CD8-positive, alpha-beta T cell (primary cell): ENCODE measurements at regions of chr4 and their contacts with region 1.

Region 1: DNA sequence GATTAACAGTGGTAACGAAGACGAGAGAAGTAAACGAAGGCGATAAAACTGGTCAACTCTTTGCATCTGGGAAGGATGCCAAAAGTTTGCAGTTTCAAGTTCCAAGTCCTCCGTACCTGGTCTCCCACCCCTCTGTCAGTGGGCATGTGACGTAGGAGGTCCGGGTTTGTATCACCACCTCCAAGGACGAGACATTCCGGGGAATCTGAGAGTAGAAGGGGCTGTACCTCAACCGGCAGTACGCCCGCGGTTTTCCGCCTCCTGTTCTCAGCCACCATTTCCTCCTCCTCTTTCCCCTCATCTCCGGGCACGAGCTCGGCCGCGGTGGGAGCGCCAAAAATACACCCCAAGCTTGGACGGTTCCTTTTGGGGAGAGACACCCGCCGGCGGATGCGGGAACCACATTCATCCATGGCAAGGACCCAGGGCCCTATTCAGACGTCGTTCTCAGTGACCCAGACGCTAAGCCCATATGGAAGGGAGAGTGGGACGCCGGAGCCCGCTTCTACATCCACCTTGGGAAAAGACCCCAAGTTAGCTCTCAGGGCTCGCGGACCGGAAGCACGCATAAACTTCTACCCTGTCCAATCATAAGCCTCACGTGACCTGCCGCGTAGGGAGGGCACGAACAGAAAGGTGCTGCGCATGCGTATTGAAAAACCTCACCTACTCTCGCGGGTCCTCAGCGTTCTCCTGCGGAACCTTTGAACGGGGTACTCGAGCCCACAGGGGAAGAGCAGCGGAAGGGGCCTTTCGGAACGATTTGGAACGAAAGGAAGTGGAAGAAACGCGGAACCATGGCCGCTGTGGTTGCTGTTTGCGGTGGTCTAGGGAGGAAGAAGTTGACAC is at the starts of genes HELQ and MRPS18C:
- DNase-seq: peak; percentile 89 to 100 (median 92)
- ATAC-seq: peak; percentile 86
- H3K4me3 ChIP-seq: peak within 1 kb of the TSS; percentile 62 to 91
- H3K4me3 Mint-ChIP-seq: peak within 1 kb of the TSS; percentile 100
- H3K27ac ChIP-seq: peak within 1 kb of the TSS; percentile 99
- H3K27ac Mint-ChIP-seq: peak within 1 kb of the TSS; percentile 100
- H3K4me1 ChIP-seq: peaks cover 27% of the 10 kb centered on the region
- H3K4me1 Mint-ChIP-seq: peaks cover 65% of the 10 kb centered on the region
- H3K27me3 ChIP-seq: no peaks in the 10 kb centered on the region
- H3K27me3 Mint-ChIP-seq: no peaks in the 10 kb centered on the region
- CTCF ChIP-seq: no peak
- total RNA-seq, gene HELQ: 25.6 to 28.0 TPM
- total RNA-seq, gene MRPS18C: 17.7 to 24.1 TPM

Region 2: GRCh38 chr4:82373816-82374625 is 1081.5 kb before region 1 on chr4 and contains the start of gene HNRNPD:
- CTCF ChIA-PET with region 1: no interaction called
- POLR2A ChIA-PET with region 1: no interaction called
- intact Hi-C with region 1: loop called in 1 of 2 experiments (anchors 2 kb)
- DNase-seq: peak; percentile 76 to 99 (median 91)
- ATAC-seq: peak; percentile 83
- H3K4me3 ChIP-seq: peak within 1 kb of the TSS; percentile 94 to 98
- H3K4me3 Mint-ChIP-seq: peak within 1 kb of the TSS; percentile 100
- H3K27ac ChIP-seq: peak within 1 kb of the TSS; percentile 87 to 99
- H3K27ac Mint-ChIP-seq: peak within 1 kb of the TSS; percentile 100
- H3K4me1 ChIP-seq: peaks cover 34% of the 10 kb centered on the region
- H3K4me1 Mint-ChIP-seq: peaks cover 51% of the 10 kb centered on the region
- H3K27me3 ChIP-seq: no peaks in the 10 kb centered on the region
- H3K27me3 Mint-ChIP-seq: no peaks in the 10 kb centered on the region
- CTCF ChIP-seq: no peak
- total RNA-seq, gene HNRNPD: 245 to 248 TPM

Region 3: GRCh38 chr4:82890901-82891706 is 564.4 kb before region 1 on chr4 and contains the start of gene SEC31A:
- CTCF ChIA-PET with region 1: no interaction called
- POLR2A ChIA-PET with region 1: no interaction called
- intact Hi-C with region 1: loop called in 1 of 2 experiments (anchors 2 kb)
- DNase-seq: peak; percentile 93 to 99 (median 97)
- ATAC-seq: peak; percentile 93
- H3K4me3 ChIP-seq: peak within 1 kb of the TSS; percentile 87 to 88
- H3K4me3 Mint-ChIP-seq: peak within 1 kb of the TSS; percentile 89
- H3K27ac ChIP-seq: peak within 1 kb of the TSS; percentile 96
- H3K27ac Mint-ChIP-seq: peak within 1 kb of the TSS; percentile 98
- H3K4me1 ChIP-seq: peaks cover 22% of the 10 kb centered on the region
- H3K4me1 Mint-ChIP-seq: peaks cover 45% of the 10 kb centered on the region
- H3K27me3 ChIP-seq: no peaks in the 10 kb centered on the region
- H3K27me3 Mint-ChIP-seq: no peaks in the 10 kb centered on the region
- CTCF ChIP-seq: no peak
- total RNA-seq, gene SEC31A: 115 to 117 TPM

Region 4: GRCh38 chr4:83034630-83035494 is 420.6 kb before region 1 on chr4 and contains the start of gene COPS4:
- CTCF ChIA-PET with region 1: no interaction called
- POLR2A ChIA-PET with region 1: interaction called, 9 read pairs
- intact Hi-C with region 1: loop called (anchors 1 kb)
- DNase-seq: peak; percentile 87 to 100 (median 94)
- ATAC-seq: peak; percentile 98
- H3K4me3 ChIP-seq: peak within 1 kb of the TSS; percentile 73 to 90
- H3K4me3 Mint-ChIP-seq: peak within 1 kb of the TSS; percentile 99
- H3K27ac ChIP-seq: peak within 1 kb of the TSS; percentile 76 to 92
- H3K27ac Mint-ChIP-seq: peak within 1 kb of the TSS; percentile 99
- H3K4me1 ChIP-seq: peaks cover 16% of the 10 kb centered on the region
- H3K4me1 Mint-ChIP-seq: peaks cover 41% of the 10 kb centered on the region
- H3K27me3 ChIP-seq: no peaks in the 10 kb centered on the region
- H3K27me3 Mint-ChIP-seq: no peaks in the 10 kb centered on the region
- CTCF ChIP-seq: peak; percentile 51
- total RNA-seq, gene COPS4: 32.2 to 35.2 TPM

Region 5: DNA sequence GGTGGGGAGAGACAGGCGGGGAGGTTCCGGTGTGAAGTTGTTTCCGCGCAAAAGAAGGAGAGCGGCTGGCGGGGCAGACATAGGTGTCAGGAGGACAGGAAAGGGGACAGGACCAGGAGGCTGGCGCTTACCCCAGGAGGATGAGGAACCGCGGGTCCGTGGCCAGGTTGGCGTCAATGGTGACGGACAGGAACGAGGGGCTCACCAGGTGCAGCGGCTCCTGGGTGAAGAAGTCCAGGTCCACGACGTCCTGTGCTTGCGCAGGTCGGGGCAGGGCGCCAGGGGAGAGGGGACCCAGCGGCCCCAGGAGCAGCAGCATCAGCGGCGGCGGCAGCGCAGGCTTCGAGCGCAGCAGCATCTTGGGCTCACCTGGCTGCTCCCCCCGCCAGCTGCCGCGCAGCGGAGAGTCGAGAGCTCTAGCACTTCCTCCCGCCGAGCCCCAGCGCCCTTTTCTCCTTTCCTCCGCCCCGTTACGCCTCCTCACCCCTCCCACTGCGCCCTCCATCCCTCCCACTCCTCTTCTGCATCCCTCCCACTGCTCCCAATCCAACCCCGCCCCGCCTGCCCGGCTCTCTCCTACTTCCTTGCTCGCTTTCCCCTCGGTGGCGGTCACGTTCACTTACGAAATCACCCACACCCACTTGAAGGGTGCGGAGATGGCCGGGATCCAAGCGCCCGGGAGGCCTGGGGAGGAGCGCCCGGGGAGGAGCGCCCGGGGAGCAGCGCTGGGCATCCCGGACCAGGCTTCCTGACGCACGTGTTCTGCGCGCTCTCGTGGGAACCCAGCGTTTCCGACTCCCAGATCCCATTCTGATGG is 120.9 kb before region 1 on chr4 and contains the start of gene HPSE:
- CTCF ChIA-PET with region 1: no interaction called
- POLR2A ChIA-PET with region 1: no interaction called
- intact Hi-C with region 1: loop called in 1 of 2 experiments (anchors 5 kb)
- DNase-seq: peak; percentile 35 to 82 (median 71)
- ATAC-seq: peak; percentile 94
- H3K4me3 ChIP-seq: peak within 1 kb of the TSS; percentile 73 to 79
- H3K4me3 Mint-ChIP-seq: peak within 1 kb of the TSS; percentile 90
- H3K27ac ChIP-seq: peak within 1 kb of the TSS; percentile 48 to 70
- H3K27ac Mint-ChIP-seq: peak within 1 kb of the TSS; percentile 82
- H3K4me1 ChIP-seq: peaks cover 11% of the 10 kb centered on the region
- H3K4me1 Mint-ChIP-seq: peaks cover 31% of the 10 kb centered on the region
- H3K27me3 ChIP-seq: peaks cover 0 to 4% of the 10 kb centered on the region in 2 experiments
- H3K27me3 Mint-ChIP-seq: peaks cover 5% of the 10 kb centered on the region
- CTCF ChIP-seq: no peak
- total RNA-seq, gene HPSE: 1.1 to 1.3 TPM

Region 6: GRCh38 chr4:83535520-83536361 is 80.2 kb after region 1 on chr4 and contains the start of gene GPAT3:
- CTCF ChIA-PET with region 1: no interaction called
- POLR2A ChIA-PET with region 1: interaction called, 3 read pairs
- intact Hi-C with region 1: loop called in 1 of 2 experiments (anchors 1 kb)
- DNase-seq: peak; percentile 30 to 74 (median 65)
- ATAC-seq: peak; percentile 80
- H3K4me3 ChIP-seq: peak within 1 kb of the TSS; percentile 70 to 86
- H3K4me3 Mint-ChIP-seq: peak within 1 kb of the TSS; percentile 89
- H3K27ac ChIP-seq: peak within 1 kb of the TSS in 1 of 2 experiments; percentile 37
- H3K27ac Mint-ChIP-seq: peak within 1 kb of the TSS; percentile 69
- H3K4me1 ChIP-seq: peaks cover 6% of the 10 kb centered on the region
- H3K4me1 Mint-ChIP-seq: peaks cover 22% of the 10 kb centered on the region
- H3K27me3 ChIP-seq: peaks cover 0 to 2% of the 10 kb centered on the region in 2 experiments
- H3K27me3 Mint-ChIP-seq: peaks cover 18% of the 10 kb centered on the region
- CTCF ChIP-seq: no peak
- total RNA-seq, gene GPAT3: 3.0 to 3.5 TPM